ENCODE measurements at regions of chr1 and their contacts with region 1.

Region 1: GRCh38 chr1:110780600-110781484 is 92.1 kb upstream of the CD53 start:
- DNase-seq: peak; percentile 68
- H3K4me3 Mint-ChIP-seq: no peak overlapping the region
- H3K27ac Mint-ChIP-seq: no peak overlapping the region
- H3K4me1 Mint-ChIP-seq: peaks cover 19% of the 10 kb centered on the region
- H3K27me3 Mint-ChIP-seq: no peaks in the 10 kb centered on the region

Region 2: DNA sequence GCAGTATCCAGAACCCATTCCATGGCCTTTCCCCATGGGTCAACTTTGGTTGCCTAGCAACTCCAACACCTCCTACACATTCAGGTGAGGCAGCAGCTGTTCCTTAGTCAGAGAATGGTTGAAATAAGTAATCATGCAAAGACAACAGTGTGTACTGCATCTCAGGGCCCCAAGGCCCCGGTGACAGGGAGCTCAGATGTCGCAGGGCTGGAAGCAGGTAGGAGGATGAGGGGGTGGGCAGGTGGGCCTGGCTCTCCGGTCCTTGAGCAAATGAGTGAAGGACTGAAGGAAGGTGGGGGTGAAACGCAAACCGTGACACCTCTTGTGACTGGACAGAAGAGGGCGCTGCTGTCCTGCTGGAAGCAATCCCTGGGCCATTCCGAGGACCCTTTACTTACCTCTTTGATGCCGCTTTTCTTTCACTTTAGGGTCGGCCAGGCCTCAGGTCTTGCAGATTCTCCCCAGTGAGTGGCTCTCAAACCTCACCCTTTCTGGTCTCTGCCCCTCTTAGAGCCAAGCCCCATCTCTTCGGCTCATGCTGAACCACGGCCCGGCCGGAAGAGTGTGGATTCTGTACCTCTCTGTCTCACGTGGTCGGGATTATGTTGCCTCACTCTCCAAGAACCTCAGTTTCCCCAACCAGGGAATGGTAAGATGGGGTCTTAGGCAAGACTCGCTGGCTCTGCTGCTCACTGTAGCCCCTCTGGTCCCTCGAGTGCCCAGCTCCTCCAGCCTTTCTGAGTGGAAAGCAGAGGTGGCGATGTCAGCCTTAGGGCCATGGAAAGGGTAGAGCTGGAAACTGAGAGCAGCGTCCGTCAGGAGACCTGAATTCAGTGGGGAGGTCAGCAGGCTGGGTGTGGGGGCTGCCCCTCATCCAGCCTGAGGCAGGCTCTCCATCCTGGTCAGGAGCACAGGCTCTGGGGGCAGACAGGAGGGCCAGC is 256.3 kb before region 1 on chr1:
- intact Hi-C with region 1: loop called (anchors 1 kb)
- DNase-seq: peak; percentile 28
- H3K4me3 Mint-ChIP-seq: no peak overlapping the region
- H3K27ac Mint-ChIP-seq: no peak overlapping the region
- H3K4me1 Mint-ChIP-seq: peaks cover 7% of the 10 kb centered on the region
- H3K27me3 Mint-ChIP-seq: peaks cover 25% of the 10 kb centered on the region

Region 3: GRCh38 chr1:110619412-110620249 is 161.2 kb before region 1 on chr1:
- intact Hi-C with region 1: loop called (anchors 1 kb)
- DNase-seq: peak; percentile 87
- H3K4me3 Mint-ChIP-seq: peak overlapping the region; percentile 83
- H3K27ac Mint-ChIP-seq: peak overlapping the region; percentile 90
- H3K4me1 Mint-ChIP-seq: peaks cover 63% of the 10 kb centered on the region
- H3K27me3 Mint-ChIP-seq: peaks cover 4% of the 10 kb centered on the region

Region 4: GRCh38 chr1:110674337-110675059 is 106.3 kb before region 1 on chr1 and contains the start of gene KCNA3:
- intact Hi-C with region 1: loop called (anchors 2 kb)
- DNase-seq: peak; percentile 68
- H3K4me3 Mint-ChIP-seq: peak within 1 kb of the TSS; percentile 100
- H3K27ac Mint-ChIP-seq: peak within 1 kb of the TSS; percentile 92
- H3K4me1 Mint-ChIP-seq: peaks cover 67% of the 10 kb centered on the region
- H3K27me3 Mint-ChIP-seq: no peaks in the 10 kb centered on the region
- total RNA-seq, gene KCNA3: 38.1 and 42.2 TPM in 2 replicates

Region 5: GRCh38 chr1:110829955-110830553 is 49.2 kb after region 1 on chr1:
- intact Hi-C with region 1: loop called (anchors 5 kb)
- DNase-seq: peak; percentile 5
- H3K4me3 Mint-ChIP-seq: no peak overlapping the region
- H3K27ac Mint-ChIP-seq: no peak overlapping the region
- H3K4me1 Mint-ChIP-seq: peaks cover 6% of the 10 kb centered on the region
- H3K27me3 Mint-ChIP-seq: peaks cover 21% of the 10 kb centered on the region

Region 6: GRCh38 chr1:111030590-111030989 is 249.7 kb after region 1 on chr1:
- intact Hi-C with region 1: loop called (anchors 1 kb)
- DNase-seq: peak; percentile 49
- H3K4me3 Mint-ChIP-seq: no peak overlapping the region
- H3K27ac Mint-ChIP-seq: no peak overlapping the region
- H3K4me1 Mint-ChIP-seq: no peaks in the 10 kb centered on the region
- H3K27me3 Mint-ChIP-seq: peaks cover 18% of the 10 kb centered on the region

Measured in activated T-helper 1 cell treated with anti-CD3 and anti-CD28 coated beads, Interleukin-12 subunit alpha, Interleukin-12 subunit beta, Interleukin-2, Interleukin-4 antibody, amounts not matched to agents 30 ng/mL and 10 ng/mL and 1 ng/mL, durations not matched to agents 14 hours and 24 hours and 36 hours (primary cell).